ENCODE measurements at regions of chr1 and their contacts with region 1.

Region 1: GRCh38 chr1:18575620-18576019 is 55.0 kb upstream of the PAX7 start:
- DNase-seq: peak; percentile 86 to 99
- H3K4me3 ChIP-seq: no peak overlapping the region
- H3K27ac ChIP-seq: no peak overlapping the region
- H3K4me1 ChIP-seq: no peaks in the 10 kb centered on the region; a peak in 1 of 7 replicates
- H3K27me3 ChIP-seq: no peaks in the 10 kb centered on the region; a peak in 1 of 7 replicates
- CTCF ChIP-seq: peak; percentile 84 to 96 (median 94)
- EP300 ChIP-seq: no peak
- POLR2A ChIP-seq: no peak
- RAD21 ChIP-seq: peak; percentile 98 to 99

Region 2: GRCh38 chr1:18217398-18218043 is 358.1 kb before region 1 on chr1:
- CTCF ChIA-PET with region 1: interaction called, 10 read pairs
- POLR2A ChIA-PET with region 1: no interaction called
- DNase-seq: peak; percentile 27 to 68
- H3K4me3 ChIP-seq: no peak overlapping the region
- H3K27ac ChIP-seq: no peak overlapping the region
- H3K4me1 ChIP-seq: no peaks in the 10 kb centered on the region
- H3K27me3 ChIP-seq: no peaks in the 10 kb centered on the region; a peak in 1 of 7 replicates
- CTCF ChIP-seq: peak; percentile 76 to 87 (median 76)
- EP300 ChIP-seq: no peak
- POLR2A ChIP-seq: no peak
- RAD21 ChIP-seq: peak; percentile 68 to 81

Region 3: DNA sequence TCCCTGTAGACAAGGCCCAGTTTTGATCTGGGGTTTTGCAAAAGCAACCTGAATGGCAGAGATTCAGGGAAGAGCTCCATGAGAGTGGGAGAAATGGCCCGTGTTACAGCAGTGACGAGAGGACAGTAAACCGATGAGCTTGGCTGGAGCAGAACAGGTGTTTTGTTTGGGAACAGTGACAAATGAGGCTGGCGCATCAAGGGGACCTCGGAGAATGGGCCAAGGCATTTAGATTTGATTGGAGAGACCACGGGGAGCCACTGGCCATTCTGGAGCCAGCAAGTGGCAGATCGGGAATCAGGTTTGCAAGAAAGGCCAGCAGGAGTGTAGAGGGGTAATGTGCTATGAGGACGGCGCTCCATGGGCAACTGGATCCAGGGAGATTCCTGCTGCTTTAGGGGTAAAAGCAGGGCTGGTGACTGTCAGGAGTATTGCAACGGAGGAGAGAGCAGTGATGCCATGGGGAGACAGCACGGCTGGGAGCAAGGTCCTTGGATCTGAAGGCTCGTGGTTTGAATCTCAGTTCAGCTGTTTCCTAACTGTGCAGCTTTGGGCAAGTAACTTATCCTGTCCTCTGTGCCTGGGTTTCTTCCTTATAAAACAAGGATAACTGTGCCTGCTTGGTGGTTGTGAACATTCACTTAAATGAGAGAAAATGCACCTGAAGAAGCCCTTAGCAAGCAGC is 104.8 kb before region 1 on chr1:
- CTCF ChIA-PET with region 1: interaction called, 12 read pairs
- POLR2A ChIA-PET with region 1: no interaction called
- DNase-seq: no peak
- H3K4me3 ChIP-seq: no peak overlapping the region
- H3K27ac ChIP-seq: no peak overlapping the region
- H3K4me1 ChIP-seq: peaks cover 0 to 1% (median 0%) of the 10 kb centered on the region in 4 experiments; a peak in 3 of 7 replicates
- H3K27me3 ChIP-seq: no peaks in the 10 kb centered on the region
- CTCF ChIP-seq: no peak
- EP300 ChIP-seq: no peak
- POLR2A ChIP-seq: no peak
- RAD21 ChIP-seq: no peak

Region 4: DNA sequence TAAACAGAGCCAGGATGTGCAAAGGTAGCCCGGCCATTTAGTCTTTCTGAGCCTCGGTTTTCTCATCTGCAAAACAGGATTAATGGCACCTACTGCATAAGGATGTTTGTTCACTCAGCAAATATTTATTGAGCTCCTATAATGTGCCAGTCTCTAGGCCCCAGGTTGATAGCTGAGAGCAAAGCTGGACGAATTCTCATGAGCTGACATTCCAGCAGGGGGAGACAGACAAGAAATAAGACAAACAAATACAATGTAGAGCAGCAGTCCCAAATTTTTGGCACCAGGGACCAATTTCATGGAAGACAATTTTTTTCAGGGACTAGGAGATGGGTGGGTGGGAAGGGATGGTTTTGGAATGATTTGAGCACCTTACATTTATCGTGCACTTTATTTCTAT is 19.3 kb before region 1 on chr1:
- CTCF ChIA-PET with region 1: interaction called, 984 read pairs
- POLR2A ChIA-PET with region 1: interaction called, 3 read pairs
- DNase-seq: no peak
- H3K4me3 ChIP-seq: no peak overlapping the region
- H3K27ac ChIP-seq: no peak overlapping the region
- H3K4me1 ChIP-seq: peaks cover 0 to 16% (median 6%) of the 10 kb centered on the region in 4 experiments; a peak in 5 of 7 replicates
- H3K27me3 ChIP-seq: peaks cover 0 to 6% (median 0%) of the 10 kb centered on the region in 4 experiments; a peak in 2 of 7 replicates
- CTCF ChIP-seq: peak; percentile 21 to 66 (median 54)
- EP300 ChIP-seq: no peak
- POLR2A ChIP-seq: no peak
- RAD21 ChIP-seq: peak; percentile 17 to 34; a peak in 2 of 4 replicates

Measured in H1 (cell line).